ENCODE measurements at regions of chr12 and their contacts with region 1.

Region 1: DNA sequence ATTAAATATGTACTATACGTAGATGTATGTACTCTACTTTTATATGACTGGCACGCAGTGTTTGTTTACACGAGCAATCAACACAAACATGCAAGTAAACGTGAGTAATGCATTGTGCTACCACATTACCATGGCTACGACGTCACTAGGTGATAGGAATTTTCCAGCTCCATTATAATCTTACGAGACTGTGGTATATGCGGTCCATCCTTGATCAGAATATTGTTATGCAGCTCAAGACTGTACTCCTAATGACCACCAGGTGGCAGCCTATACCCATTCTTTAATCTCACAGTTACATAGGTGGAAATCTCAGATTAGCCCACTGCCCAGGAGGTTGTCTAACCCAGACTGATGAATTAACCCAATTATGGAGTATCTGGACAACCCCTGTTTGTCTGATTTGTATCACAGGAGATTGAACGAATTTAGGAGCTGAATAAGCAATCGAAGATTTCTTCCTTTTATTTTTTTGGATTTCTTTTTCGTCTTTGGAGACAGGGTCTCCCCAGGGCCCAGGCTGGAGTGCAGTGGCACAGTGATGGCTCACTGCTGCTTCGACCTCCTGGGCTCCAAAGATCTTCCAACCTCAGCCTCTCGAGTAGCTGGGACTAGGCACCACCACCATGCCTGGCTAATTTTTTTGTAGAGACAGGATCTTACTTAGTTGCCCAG is 8.7 kb upstream of the TESPA1 start:
- DNase-seq: peak in 1 of 2 experiments; percentile 55
- H3K4me3 ChIP-seq: no peak overlapping the region
- H3K27ac ChIP-seq: no peak overlapping the region
- H3K4me1 ChIP-seq: peaks cover 1 to 11% (median 7%) of the 10 kb centered on the region in 4 experiments; a peak in 5 of 7 replicates
- H3K27me3 ChIP-seq: no peaks in the 10 kb centered on the region
- CTCF ChIP-seq: peak in 2 of 3 experiments; percentile 75 to 88; a peak in 3 of 4 replicates
- EP300 ChIP-seq: no peak
- POLR2A ChIP-seq: no peak
- RAD21 ChIP-seq: peak; percentile 94 to 97

Region 2: DNA sequence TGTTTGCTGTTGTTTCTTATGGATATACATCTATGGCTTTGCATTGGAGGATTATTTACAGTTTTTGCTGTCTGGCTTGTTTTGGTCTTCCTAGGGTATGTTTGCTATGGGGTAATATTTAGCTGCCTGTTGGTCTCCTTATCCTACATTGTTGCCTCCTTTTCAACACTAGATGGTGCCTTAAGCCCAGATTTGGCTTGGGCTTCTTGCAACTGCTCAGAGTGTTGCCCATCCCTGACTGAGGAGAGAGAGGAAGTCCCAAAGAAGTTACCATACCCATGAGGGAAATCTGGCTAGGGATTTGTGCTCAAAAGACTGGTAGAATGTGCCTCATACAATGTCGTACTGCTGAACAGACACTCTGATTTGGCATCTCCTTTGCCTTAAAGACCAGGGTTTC is 233.5 kb before region 1 on chr12:
- CTCF ChIA-PET with region 1: interaction called, 13 read pairs
- POLR2A ChIA-PET with region 1: no interaction called
- DNase-seq: peak; percentile 25 to 44
- H3K4me3 ChIP-seq: no peak overlapping the region
- H3K27ac ChIP-seq: no peak overlapping the region
- H3K4me1 ChIP-seq: no peaks in the 10 kb centered on the region
- H3K27me3 ChIP-seq: no peaks in the 10 kb centered on the region
- CTCF ChIP-seq: peak in 2 of 3 experiments; percentile 73 to 90; a peak in 3 of 4 replicates
- EP300 ChIP-seq: no peak
- POLR2A ChIP-seq: no peak
- RAD21 ChIP-seq: peak; percentile 93 to 97

Region 3: DNA sequence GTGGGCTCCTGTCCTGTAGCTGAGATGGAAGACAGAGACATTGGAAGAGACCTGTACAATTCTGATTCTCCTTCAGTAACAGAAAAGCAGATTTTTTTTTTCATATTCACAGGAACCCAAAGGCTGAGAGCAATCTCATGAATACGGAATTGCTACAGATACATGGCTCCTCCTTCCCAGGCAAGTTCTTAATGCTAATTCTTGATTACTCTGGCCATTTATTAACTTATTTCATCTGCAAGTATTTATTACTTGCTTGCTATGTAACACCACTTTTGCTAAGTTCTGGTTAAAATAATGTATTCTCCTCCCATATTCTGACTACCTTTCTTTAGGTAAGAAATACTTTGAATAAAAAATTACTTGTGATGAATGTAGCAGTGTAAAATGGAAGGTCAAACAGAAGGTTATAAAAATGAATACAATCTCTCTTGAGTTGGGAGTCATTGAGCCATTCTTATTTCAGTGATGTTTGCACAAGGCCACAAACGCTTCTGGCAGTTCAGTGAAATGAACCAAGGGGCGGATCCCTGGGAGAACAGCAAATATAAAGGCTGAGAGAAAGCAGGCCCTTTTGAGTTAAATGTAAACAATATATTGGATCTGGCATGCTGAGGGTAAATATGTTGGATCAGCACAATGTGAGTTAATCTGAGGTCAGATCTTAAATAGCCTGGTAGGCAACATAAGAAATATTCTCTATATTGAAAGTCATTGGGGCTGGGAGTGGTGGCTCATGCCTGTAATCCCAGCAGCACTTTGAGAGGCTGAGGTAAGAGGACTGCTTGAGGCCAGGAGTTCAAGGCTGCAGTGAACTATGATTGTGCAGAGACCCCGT is 101.4 kb before region 1 on chr12:
- CTCF ChIA-PET with region 1: no interaction called
- POLR2A ChIA-PET with region 1: no interaction called
- DNase-seq: no peak
- H3K4me3 ChIP-seq: no peak overlapping the region
- H3K27ac ChIP-seq: no peak overlapping the region; the same call in 1 of the 2 replicates
- H3K4me1 ChIP-seq: peaks cover 0 to 4% (median 1%) of the 10 kb centered on the region in 4 experiments; a peak in 2 of 7 replicates
- H3K27me3 ChIP-seq: no peaks in the 10 kb centered on the region
- CTCF ChIP-seq: no peak
- EP300 ChIP-seq: no peak
- POLR2A ChIP-seq: no peak
- RAD21 ChIP-seq: no peak

Region 4: DNA sequence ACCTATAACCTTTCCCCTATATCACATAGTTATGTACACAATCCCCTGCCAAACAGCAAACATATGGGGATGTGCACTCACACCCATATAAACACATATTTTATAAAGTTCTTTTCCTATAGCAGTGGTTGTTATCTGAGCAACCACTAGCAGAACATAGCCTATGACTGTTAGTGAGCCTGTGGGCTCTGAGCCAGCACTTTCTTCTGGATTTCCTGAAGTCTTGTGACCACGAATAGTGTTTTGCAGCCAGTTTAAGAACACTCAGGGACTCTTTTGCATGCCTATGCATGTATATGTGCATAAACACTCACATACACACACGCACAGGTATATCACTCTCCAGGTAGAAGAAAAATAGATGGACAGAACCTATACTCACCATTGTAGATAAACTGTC is 25.8 kb before region 1 on chr12:
- CTCF ChIA-PET with region 1: interaction called, 26 read pairs
- POLR2A ChIA-PET with region 1: interaction called, 3 read pairs
- DNase-seq: no peak
- H3K4me3 ChIP-seq: no peak overlapping the region
- H3K27ac ChIP-seq: no peak overlapping the region
- H3K4me1 ChIP-seq: no peaks in the 10 kb centered on the region
- H3K27me3 ChIP-seq: no peaks in the 10 kb centered on the region
- CTCF ChIP-seq: no peak
- EP300 ChIP-seq: no peak
- POLR2A ChIP-seq: no peak
- RAD21 ChIP-seq: no peak

Region 5: GRCh38 chr12:55008944-55009585 is 15.8 kb after region 1 on chr12:
- CTCF ChIA-PET with region 1: interaction called, 22 read pairs
- POLR2A ChIA-PET with region 1: no interaction called
- DNase-seq: no peak
- H3K4me3 ChIP-seq: no peak overlapping the region
- H3K27ac ChIP-seq: no peak overlapping the region
- H3K4me1 ChIP-seq: peaks cover 0 to 2% (median 0%) of the 10 kb centered on the region in 4 experiments; a peak in 2 of 7 replicates
- H3K27me3 ChIP-seq: no peaks in the 10 kb centered on the region
- CTCF ChIP-seq: no peak
- EP300 ChIP-seq: no peak
- POLR2A ChIP-seq: no peak
- RAD21 ChIP-seq: no peak

Region 6: GRCh38 chr12:55043542-55043941 is 50.2 kb after region 1 on chr12:
- CTCF ChIA-PET with region 1: interaction called, 17 read pairs
- POLR2A ChIA-PET with region 1: no interaction called
- DNase-seq: no peak
- H3K4me3 ChIP-seq: no peak overlapping the region
- H3K27ac ChIP-seq: no peak overlapping the region
- H3K4me1 ChIP-seq: peaks cover 0 to 7% (median 3%) of the 10 kb centered on the region in 4 experiments; a peak in 3 of 7 replicates
- H3K27me3 ChIP-seq: no peaks in the 10 kb centered on the region
- CTCF ChIP-seq: no peak
- EP300 ChIP-seq: no peak
- POLR2A ChIP-seq: no peak
- RAD21 ChIP-seq: no peak

Region 7: GRCh38 chr12:55060470-55060869 is 67.2 kb after region 1 on chr12:
- CTCF ChIA-PET with region 1: interaction called, 627 read pairs
- POLR2A ChIA-PET with region 1: no interaction called
- DNase-seq: no peak
- H3K4me3 ChIP-seq: no peak overlapping the region
- H3K27ac ChIP-seq: no peak overlapping the region
- H3K4me1 ChIP-seq: peaks cover 0 to 6% (median 0%) of the 10 kb centered on the region in 4 experiments; a peak in 2 of 7 replicates
- H3K27me3 ChIP-seq: no peaks in the 10 kb centered on the region
- CTCF ChIP-seq: no peak
- EP300 ChIP-seq: no peak
- POLR2A ChIP-seq: no peak
- RAD21 ChIP-seq: no peak

Measured in H1 (cell line).